A549 (cell line): ENCODE measurements at regions of chr17 and their contacts with region 1.

Region 1: GRCh38 chr17:77088455-77089123 is 52.2 kb upstream of the SEC14L1 start:
- DNase-seq: peak; percentile 99
- ATAC-seq: peak; percentile 91 to 96
- H3K4me3 ChIP-seq: peak overlapping the region; percentile 99
- H3K27ac ChIP-seq: peak overlapping the region; percentile 96 to 100
- H3K4me1 ChIP-seq: peaks cover 28% of the 10 kb centered on the region
- CTCF ChIP-seq: peak; percentile 73
- EP300 ChIP-seq: no peak
- POLR2A ChIP-seq: peak; percentile 88
- RAD21 ChIP-seq: peak; percentile 46 to 67

Region 2: DNA sequence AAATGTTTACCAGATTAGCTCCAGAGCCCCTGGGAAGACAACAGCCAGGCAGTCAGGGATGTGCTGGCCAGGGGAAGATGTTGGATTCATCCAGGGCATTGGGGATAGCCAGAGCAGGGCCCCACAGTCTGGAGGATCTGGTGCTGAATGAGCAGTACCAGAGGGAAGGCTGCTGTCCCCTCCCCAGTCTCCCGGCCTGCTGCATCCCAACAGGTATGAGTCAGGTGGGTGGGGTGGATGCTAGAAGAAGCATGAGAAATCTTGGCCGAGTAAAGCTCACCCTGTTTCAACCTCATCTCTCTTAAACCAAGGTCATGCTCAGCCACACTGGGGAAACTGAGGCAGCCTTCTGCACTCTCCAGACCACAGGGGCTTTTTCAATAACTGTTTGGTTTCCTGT is 19.7 kb before region 1 on chr17:
- CTCF ChIA-PET with region 1: interaction called, 67 read pairs
- POLR2A ChIA-PET with region 1: interaction called, 3 read pairs
- DNase-seq: no peak
- ATAC-seq: peak in 1 of 2 experiments; percentile 21; a peak in 2 of 6 replicates
- H3K4me3 ChIP-seq: no peak overlapping the region
- H3K27ac ChIP-seq: peak overlapping the region in 1 of 2 experiments; percentile 6; a peak in 1 of 6 replicates
- H3K4me1 ChIP-seq: peaks cover 5% of the 10 kb centered on the region; the same call in 1 of the 3 replicates
- CTCF ChIP-seq: no peak
- EP300 ChIP-seq: no peak
- POLR2A ChIP-seq: no peak
- RAD21 ChIP-seq: no peak

Region 3: DNA sequence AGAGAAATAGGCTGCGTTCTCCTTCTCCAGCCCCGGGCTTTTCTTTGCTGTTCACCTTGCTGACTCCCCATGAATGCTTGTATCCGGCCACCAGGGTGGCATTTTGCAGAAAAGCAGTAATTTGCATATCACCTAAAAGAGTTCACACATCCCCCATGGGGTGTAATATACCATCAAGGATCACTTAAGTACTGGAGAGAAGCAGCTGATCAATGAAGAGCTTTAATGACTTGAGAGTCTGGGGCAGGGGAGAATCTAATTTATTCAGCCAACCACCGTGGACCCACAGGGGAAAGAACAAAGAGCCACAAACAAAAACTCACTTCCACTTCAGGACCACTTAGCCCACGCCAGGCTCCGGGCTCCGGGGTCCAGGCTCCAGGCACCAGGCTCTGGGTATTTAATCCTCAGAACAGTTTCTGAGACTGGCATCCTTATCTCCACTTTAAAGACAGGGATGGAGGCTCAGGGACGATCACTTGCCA is 18.3 kb after region 1 on chr17:
- CTCF ChIA-PET with region 1: interaction called, 18 read pairs
- POLR2A ChIA-PET with region 1: interaction called, 3 read pairs
- DNase-seq: no peak
- ATAC-seq: no peak
- H3K4me3 ChIP-seq: no peak overlapping the region
- H3K27ac ChIP-seq: no peak overlapping the region
- H3K4me1 ChIP-seq: peaks cover 8% of the 10 kb centered on the region
- CTCF ChIP-seq: no peak
- EP300 ChIP-seq: no peak
- POLR2A ChIP-seq: no peak
- RAD21 ChIP-seq: no peak

Region 4: DNA sequence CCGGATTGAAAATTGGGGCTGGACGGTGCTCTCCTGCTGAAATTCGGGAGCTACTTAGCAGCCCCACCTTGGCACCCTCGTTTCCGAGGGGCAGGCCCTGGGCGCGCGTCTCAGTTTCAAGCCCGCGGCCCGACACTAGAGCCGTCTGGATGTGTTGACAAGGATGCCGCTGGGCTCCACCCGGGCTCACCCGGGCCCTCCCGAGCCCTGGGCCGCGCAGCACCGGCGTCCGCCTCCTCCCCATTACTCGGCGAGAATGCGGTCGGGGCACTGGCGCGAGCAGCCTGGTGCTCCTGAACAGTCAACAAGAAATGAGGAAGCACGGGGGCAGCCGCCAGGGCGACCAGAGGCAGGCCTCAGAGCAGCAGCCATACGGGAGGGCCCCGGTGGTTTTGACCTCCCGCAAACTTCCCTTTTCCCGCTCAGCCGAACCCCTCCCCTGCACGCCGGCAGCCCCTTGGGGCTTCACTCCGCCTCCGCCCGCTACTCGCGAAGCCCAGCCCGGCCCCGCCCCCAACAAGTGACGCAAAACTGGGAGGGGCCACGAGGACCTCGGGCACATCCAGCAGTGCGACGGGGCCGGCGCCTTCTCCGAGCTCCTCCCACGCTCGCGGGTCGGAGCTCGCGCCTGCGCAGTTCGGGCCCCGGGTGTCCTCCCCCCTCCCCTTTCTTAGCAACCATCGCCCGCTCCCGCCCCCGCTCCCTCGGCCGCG is 51.7 kb after region 1 on chr17:
- CTCF ChIA-PET with region 1: interaction called, 10 read pairs
- POLR2A ChIA-PET with region 1: interaction called, 18 read pairs
- DNase-seq: peak; percentile 91 to 99
- ATAC-seq: peak; percentile 91 to 95
- H3K4me3 ChIP-seq: peak overlapping the region; percentile 90
- H3K27ac ChIP-seq: peak overlapping the region; percentile 95 to 96
- H3K4me1 ChIP-seq: peaks cover 13% of the 10 kb centered on the region
- CTCF ChIP-seq: no peak
- EP300 ChIP-seq: no peak
- POLR2A ChIP-seq: peak; percentile 88
- RAD21 ChIP-seq: peak in 1 of 2 experiments; percentile 25; a peak in 2 of 5 replicates

Region 5: DNA sequence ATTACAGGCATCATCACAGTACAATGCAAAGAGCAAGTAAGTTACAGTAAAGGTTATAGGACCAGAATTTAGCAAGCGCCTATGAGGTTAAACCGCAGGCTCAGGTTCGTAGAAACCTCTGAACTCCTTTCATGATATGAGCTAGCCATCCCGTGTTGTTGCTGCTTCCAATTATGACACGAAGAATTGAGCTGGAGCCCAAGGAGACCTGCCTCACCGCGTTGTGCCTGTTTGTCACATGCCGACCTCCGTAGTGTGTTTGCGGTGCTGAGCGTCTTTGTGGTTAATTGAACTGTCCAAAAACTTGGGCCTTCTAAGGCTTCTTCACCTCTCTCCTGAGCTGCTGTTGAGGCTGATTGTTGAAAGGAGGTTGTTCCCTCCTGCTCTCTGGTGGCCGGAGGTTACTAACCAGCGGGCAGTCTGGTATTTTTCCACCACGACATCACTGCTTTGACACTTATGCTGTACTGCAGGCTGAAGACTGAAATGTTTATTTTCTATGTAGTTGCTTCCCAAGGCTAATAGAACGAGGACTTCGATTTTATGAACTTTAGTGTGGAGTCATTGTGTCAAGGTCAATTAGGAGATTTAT is 119.7 kb after region 1 on chr17:
- CTCF ChIA-PET with region 1: interaction called, 40 read pairs
- POLR2A ChIA-PET with region 1: no interaction called
- DNase-seq: peak in 1 of 2 experiments; percentile 36
- ATAC-seq: peak; percentile 59 to 61; a peak in 5 of 6 replicates
- H3K4me3 ChIP-seq: no peak overlapping the region
- H3K27ac ChIP-seq: no peak overlapping the region
- H3K4me1 ChIP-seq: no peaks in the 10 kb centered on the region
- CTCF ChIP-seq: 0 out of 3 replicates have a peak, but pooled peaks have one; percentile 9
- EP300 ChIP-seq: no peak
- POLR2A ChIP-seq: no peak
- RAD21 ChIP-seq: no peak

Region 6: DNA sequence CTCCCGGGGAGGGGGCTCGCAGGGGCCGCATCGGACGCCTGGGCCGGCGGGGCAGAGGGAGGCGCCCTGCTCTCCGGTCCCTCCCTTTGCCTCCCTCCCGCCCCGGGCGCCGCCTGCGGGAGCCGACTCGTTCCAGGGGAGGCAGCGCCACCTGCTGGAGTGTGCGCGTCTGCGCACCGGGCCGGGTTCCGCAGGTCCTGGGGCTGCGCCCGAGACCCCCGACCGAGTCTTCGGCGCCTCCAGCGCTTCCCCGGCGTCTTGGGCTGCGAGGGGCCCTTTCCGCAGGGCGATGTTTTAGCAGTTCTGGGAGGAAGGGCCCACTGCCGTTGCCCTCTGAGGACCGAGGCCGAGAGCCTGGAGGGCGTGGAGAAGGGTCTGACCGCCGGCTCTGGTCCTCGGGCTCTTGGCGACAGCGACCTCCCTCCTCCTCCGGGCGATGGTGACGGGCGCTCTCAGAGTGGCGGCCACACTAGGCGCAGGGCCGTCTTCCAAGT is 158.5 kb after region 1 on chr17:
- CTCF ChIA-PET with region 1: interaction called, 94 read pairs
- POLR2A ChIA-PET with region 1: interaction called, 8 read pairs
- DNase-seq: peak; percentile 76 to 82
- ATAC-seq: peak; percentile 91 to 97
- H3K4me3 ChIP-seq: peak overlapping the region; percentile 57
- H3K27ac ChIP-seq: peak overlapping the region; percentile 81 to 92
- H3K4me1 ChIP-seq: peaks cover 3% of the 10 kb centered on the region; the same call in 1 of the 3 replicates
- CTCF ChIP-seq: peak; percentile 99
- EP300 ChIP-seq: no peak
- POLR2A ChIP-seq: no peak
- RAD21 ChIP-seq: peak; percentile 90 to 99

Region 7: GRCh38 chr17:77634710-77635109 is 546.1 kb after region 1 on chr17:
- CTCF ChIA-PET with region 1: no interaction called
- POLR2A ChIA-PET with region 1: no interaction called
- DNase-seq: no peak
- ATAC-seq: no peak
- H3K4me3 ChIP-seq: no peak overlapping the region
- H3K27ac ChIP-seq: no peak overlapping the region
- H3K4me1 ChIP-seq: no peaks in the 10 kb centered on the region
- CTCF ChIP-seq: no peak
- EP300 ChIP-seq: no peak
- POLR2A ChIP-seq: no peak
- RAD21 ChIP-seq: no peak